Upper lobe of right lung (tissue), 1 donor: ENCODE measurements at regions of chr6 and their contacts with region 1.

Region 1: GRCh38 chr6:91852252-91852651 is 1265.4 kb upstream of the MAP3K7 start:
- DNase-seq: no peak
- ATAC-seq: no peak
- H3K4me3 ChIP-seq: no peak overlapping the region
- H3K27ac ChIP-seq: no peak overlapping the region
- H3K4me1 ChIP-seq: no peaks in the 10 kb centered on the region
- H3K27me3 ChIP-seq: no peaks in the 10 kb centered on the region
- CTCF ChIP-seq: no peak

Region 2: DNA sequence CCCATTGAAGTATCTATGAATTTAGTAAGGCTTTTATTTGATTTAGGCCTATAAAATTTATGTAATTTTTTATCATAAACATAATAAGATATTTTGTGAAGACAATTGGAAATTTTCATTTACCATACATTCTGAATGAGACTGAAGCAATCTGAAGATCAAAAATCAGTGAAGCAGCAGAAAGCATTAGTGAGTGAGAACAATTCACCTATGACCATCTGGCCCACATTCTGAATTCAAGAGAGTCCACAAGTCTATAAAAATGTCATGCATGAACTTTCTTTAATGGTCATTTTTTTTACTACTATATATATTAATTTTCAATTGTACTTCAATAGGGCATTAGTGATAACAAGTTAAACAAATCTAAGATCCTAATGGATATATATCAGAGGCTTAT is 238.8 kb before region 1 on chr6:
- intact Hi-C with region 1: no loop called
- DNase-seq: no peak
- ATAC-seq: no peak
- H3K4me3 ChIP-seq: no peak overlapping the region
- H3K27ac ChIP-seq: no peak overlapping the region
- H3K4me1 ChIP-seq: no peaks in the 10 kb centered on the region
- H3K27me3 ChIP-seq: no peaks in the 10 kb centered on the region
- CTCF ChIP-seq: no peak

Region 3: DNA sequence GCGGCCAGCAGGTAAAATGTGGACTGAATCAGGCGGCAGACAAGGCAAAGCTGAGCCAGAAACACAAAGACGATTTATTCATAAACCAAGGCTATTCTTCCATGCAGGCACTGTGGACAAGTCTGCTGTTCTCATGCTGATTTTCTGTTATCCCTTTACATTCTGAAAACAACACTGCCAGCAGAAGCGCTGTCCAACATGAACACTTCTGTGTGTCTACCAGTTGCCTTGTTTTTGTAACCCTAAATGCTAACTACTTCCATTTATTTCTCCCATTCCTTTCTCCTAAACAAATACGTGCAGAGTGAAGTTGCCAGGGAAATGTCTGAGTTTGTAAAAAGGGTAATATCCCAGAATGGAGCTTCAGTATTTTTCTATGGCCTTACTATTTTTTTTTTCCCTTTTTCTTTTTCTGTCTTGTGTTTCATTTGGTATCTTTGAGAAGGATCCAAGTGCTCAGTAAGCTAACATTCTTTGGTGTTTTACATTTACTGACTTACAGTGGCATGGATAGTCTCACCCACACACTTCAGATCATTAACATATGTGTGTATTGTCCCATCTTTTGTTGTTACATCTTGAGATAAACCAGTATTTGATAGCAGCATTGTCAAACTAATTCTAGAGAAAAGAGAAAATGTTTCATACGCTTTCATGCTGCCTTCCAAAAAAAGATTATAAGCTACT is 43.5 kb after region 1 on chr6:
- intact Hi-C with region 1: loop called (anchors 5 kb)
- DNase-seq: no peak
- ATAC-seq: no peak
- H3K4me3 ChIP-seq: no peak overlapping the region
- H3K27ac ChIP-seq: no peak overlapping the region
- H3K4me1 ChIP-seq: no peaks in the 10 kb centered on the region
- H3K27me3 ChIP-seq: no peaks in the 10 kb centered on the region
- CTCF ChIP-seq: no peak